ENCODE measurements at regions of chr1 and their contacts with region 1.

Region 1: GRCh38 chr1:172443626-172444453 is at the start of gene PIGC:
- DNase-seq: peak; percentile 93
- H3K4me3 ChIP-seq: peak within 1 kb of the TSS; percentile 61 to 98 (median 86)
- H3K27ac ChIP-seq: peak within 1 kb of the TSS; percentile 79 to 92 (median 82)
- H3K4me1 ChIP-seq: peaks cover 6 to 17% (median 9%) of the 10 kb centered on the region in 4 donors
- H3K27me3 ChIP-seq: no peaks in the 10 kb centered on the region
- CTCF ChIP-seq: peak; percentile 84 to 91 (median 86)
- EP300 ChIP-seq: no peak
- POLR2A ChIP-seq: peak; percentile 34
- total RNA-seq, gene PIGC: 9.8 to 43.8 (median 22.8) TPM

Region 2: DNA sequence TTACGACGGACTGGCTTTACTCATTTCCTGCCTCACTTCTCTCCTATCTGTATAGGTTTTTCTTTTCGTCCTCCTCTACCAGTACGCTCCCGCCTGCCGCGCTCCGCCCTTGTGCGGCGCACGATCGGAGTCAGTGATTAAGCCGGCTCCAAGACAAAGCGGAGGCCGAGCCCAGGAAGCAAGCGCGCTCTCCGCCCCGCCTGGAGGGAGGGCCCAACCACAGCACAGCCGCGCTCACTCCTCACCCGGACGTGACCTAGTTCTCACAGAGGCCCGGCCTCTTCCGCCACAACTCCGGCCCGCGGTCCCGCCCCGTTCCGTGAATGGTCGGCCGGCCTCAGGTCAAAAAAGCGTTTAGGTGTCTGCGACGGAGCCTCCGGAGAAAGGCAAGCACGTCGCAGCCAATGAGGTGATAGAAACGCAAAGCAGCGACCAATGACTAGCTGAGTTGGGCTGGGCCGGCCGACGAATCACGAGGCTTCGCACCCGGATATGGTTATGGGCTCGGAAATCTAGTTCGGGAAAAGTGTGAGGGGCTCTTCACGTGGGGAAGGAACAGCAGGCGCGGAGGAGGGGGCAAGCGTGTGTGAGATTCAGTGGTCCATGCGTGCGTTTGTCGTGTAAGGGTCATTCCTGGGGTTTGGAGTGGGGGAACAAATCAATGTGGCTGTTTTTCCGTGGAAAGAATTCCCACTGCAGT is 662.5 kb before region 1 on chr1 and contains the start of gene METTL13:
- in situ Hi-C with region 1: loop called in 1 of 4 experiments (anchors 25 kb)
- intact Hi-C with region 1: no loop called
- DNase-seq: peak; percentile 99
- H3K4me3 ChIP-seq: peak within 1 kb of the TSS; percentile 64 to 78 (median 64)
- H3K27ac ChIP-seq: peak within 1 kb of the TSS; percentile 89 to 98 (median 91)
- H3K4me1 ChIP-seq: peaks cover 9 to 40% (median 22%) of the 10 kb centered on the region in 4 donors
- H3K27me3 ChIP-seq: no peaks in the 10 kb centered on the region
- CTCF ChIP-seq: no peak
- EP300 ChIP-seq: no peak
- POLR2A ChIP-seq: peak; percentile 95
- total RNA-seq, gene METTL13: 10.5 to 80.8 (median 25.8) TPM

Region 3: DNA sequence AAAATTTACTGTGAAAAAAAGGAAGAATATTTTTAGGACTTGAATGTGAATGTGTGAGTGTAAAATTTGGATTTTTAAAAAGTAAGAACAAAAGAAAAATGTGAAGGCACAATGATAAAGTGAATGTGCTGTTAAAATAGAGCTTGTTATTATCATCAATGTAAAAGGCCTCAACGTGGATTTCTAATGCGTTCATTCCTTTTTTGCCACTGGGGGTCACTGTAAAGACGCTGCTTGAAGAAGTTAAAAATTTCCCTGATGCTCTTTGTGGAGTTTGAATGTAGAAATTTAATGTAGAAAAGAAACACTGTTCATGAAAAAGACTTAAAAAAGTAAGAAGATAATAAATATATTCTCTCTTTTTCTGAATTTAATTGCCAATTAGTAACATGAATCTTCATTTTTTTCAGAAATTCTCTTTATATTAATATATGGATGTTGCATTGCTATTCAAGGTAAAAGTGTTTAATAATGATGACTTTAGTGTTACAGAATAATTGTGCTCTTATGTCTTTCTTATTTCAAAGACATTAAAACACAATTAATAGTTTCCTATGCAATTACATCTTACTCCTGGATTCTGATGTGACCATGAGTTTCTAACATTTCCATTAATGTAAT is 441.0 kb before region 1 on chr1:
- in situ Hi-C with region 1: loop called in 1 of 4 experiments (anchors 25 kb)
- intact Hi-C with region 1: no loop called
- DNase-seq: peak; percentile 14
- H3K4me3 ChIP-seq: no peak overlapping the region
- H3K27ac ChIP-seq: no peak overlapping the region
- H3K4me1 ChIP-seq: peaks cover 0 to 4% (median 0%) of the 10 kb centered on the region in 4 donors
- H3K27me3 ChIP-seq: no peaks in the 10 kb centered on the region
- CTCF ChIP-seq: peak; percentile 53 to 62 (median 58)
- EP300 ChIP-seq: no peak
- POLR2A ChIP-seq: no peak